ENCODE measurements at regions of chr5 and their contacts with region 1.

Region 1: GRCh38 chr5:40755407-40756365 is at the start of gene TTC33:
- DNase-seq: peak; percentile 95
- H3K4me3 Mint-ChIP-seq: no peak within 1 kb of the TSS
- H3K27ac Mint-ChIP-seq: no peak within 1 kb of the TSS
- H3K4me1 Mint-ChIP-seq: no peaks in the 10 kb centered on the region
- H3K27me3 Mint-ChIP-seq: no peaks in the 10 kb centered on the region
- CTCF ChIP-seq: peak; percentile 39
- total RNA-seq, gene TTC33: 13.3 and 13.7 TPM in 2 replicates

Region 2: GRCh38 chr5:39986618-39987017 is 769.1 kb before region 1 on chr5:
- CTCF ChIA-PET with region 1: no interaction called
- POLR2A ChIA-PET with region 1: no interaction called
- intact Hi-C with region 1: no loop called
- DNase-seq: no peak
- H3K4me3 Mint-ChIP-seq: no peak overlapping the region
- H3K27ac Mint-ChIP-seq: no peak overlapping the region
- H3K4me1 Mint-ChIP-seq: no peaks in the 10 kb centered on the region
- H3K27me3 Mint-ChIP-seq: no peaks in the 10 kb centered on the region
- CTCF ChIP-seq: no peak

Region 3: GRCh38 chr5:40823459-40823858 is 67.8 kb after region 1 on chr5:
- CTCF ChIA-PET with region 1: interaction called, 5 read pairs
- POLR2A ChIA-PET with region 1: interaction called, 10 read pairs
- intact Hi-C with region 1: no loop called
- DNase-seq: no peak
- H3K4me3 Mint-ChIP-seq: no peak overlapping the region
- H3K27ac Mint-ChIP-seq: no peak overlapping the region
- H3K4me1 Mint-ChIP-seq: peaks cover 5% of the 10 kb centered on the region
- H3K27me3 Mint-ChIP-seq: no peaks in the 10 kb centered on the region
- CTCF ChIP-seq: no peak

Region 4: GRCh38 chr5:40834849-40835787 is 79.4 kb after region 1 on chr5 and contains the start of gene RPL37:
- CTCF ChIA-PET with region 1: no interaction called
- POLR2A ChIA-PET with region 1: interaction called, 15 read pairs
- intact Hi-C with region 1: loop called (anchors 2 kb)
- DNase-seq: peak; percentile 97
- H3K4me3 Mint-ChIP-seq: peak within 1 kb of the TSS; percentile 98
- H3K27ac Mint-ChIP-seq: peak within 1 kb of the TSS; percentile 98
- H3K4me1 Mint-ChIP-seq: peaks cover 17% of the 10 kb centered on the region
- H3K27me3 Mint-ChIP-seq: no peaks in the 10 kb centered on the region
- CTCF ChIP-seq: no peak
- total RNA-seq, gene RPL37: 2,063 and 2,180 TPM in 2 replicates

Region 5: GRCh38 chr5:40879163-40879942 is 123.7 kb after region 1 on chr5:
- CTCF ChIA-PET with region 1: interaction called, 7 read pairs
- POLR2A ChIA-PET with region 1: no interaction called
- intact Hi-C with region 1: loop called (anchors 1 kb)
- DNase-seq: peak; percentile 38
- H3K4me3 Mint-ChIP-seq: no peak overlapping the region
- H3K27ac Mint-ChIP-seq: no peak overlapping the region
- H3K4me1 Mint-ChIP-seq: no peaks in the 10 kb centered on the region
- H3K27me3 Mint-ChIP-seq: no peaks in the 10 kb centered on the region
- CTCF ChIP-seq: peak; percentile 37

Measured in MCF 10A (cell line).